GM18951 (cell line): ENCODE measurements at regions of chr17 and their contacts with region 1.

Region 1: GRCh38 chr17:51006601-51007000 is 114.1 kb downstream of the SPAG9 start:
- POLR2A ChIP-seq: no peak

Region 2: DNA sequence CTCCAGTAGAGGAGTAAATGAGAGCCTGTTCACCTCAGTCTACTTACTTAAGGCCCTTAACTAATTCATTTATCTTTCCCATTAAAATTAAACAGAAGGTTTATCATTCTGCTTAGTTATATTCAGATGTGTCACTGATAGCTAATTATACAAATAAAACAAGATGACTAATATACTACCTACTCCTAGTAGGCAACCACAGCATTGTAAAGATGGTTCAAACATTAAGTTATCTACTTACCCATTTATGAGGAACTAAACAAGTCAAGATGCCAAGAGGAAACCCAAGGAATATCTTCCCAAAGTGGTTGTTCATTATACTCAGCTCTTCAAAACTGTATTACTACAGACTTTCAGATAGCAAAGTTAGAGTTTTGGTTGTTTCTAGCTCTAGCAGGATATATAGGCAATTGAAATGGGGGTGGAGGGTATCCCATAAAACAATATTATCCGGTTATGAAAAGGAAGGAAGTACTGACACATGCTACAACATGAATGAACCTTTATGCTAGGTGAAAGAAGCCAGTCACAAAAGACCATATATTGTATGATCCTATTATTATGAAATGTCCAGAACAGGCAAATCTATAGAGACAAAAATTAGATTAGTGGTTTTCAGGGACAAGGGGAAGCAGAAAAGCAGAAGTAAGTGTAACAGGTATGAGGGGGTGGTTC is 57.6 kb after region 1 on chr17:
- in situ Hi-C with region 1: loop called (anchors 5 kb)
- POLR2A ChIP-seq: no peak